A673 (cell line): ENCODE measurements at regions of chr13 and their contacts with region 1.

Region 1: DNA sequence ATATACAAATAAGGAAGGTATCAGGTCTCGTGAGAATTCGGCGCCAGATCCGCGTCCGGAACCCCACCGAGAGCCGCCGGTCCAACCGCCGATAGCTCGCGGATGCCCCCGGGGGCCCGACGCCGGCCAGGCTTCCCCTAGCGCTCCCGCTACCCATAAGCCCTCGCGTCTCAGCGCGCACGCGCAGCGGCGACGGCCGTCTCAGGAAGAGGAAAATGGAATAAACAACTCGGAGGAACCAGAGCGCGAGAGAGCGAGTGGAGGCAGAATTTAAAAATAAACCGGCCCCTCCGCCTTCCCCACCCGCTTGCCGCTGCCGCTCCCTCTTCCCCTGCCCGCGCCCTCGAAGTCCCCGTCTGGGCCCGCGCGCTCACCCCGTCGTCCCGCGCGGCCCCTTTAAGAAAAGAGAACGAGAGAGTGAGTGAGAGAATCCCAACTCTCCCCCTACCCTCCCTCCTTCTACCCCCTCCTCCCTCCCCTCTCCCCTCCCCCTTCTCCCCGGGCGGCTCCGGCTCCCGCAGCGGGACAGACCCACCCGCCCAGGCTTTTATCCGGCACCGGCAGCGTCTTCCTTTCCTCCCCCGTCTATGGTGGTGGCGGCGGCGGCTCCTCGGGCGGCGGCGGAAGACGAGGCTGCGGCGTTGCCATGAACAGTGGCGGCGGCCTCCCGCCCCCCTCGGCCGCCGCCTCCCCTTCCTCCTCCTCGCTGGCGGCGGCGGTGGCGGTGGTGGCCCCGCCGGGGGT is at the start of gene PAN3:
- DNase-seq: peak; percentile 96
- H3K4me3 ChIP-seq: peak within 1 kb of the TSS; percentile 98
- H3K27ac ChIP-seq: peak within 1 kb of the TSS; percentile 100
- H3K4me1 ChIP-seq: peaks cover 12% of the 10 kb centered on the region
- H3K27me3 ChIP-seq: no peaks in the 10 kb centered on the region
- CTCF ChIP-seq: no peak
- total RNA-seq, gene PAN3: 41.5 and 46.1 TPM in 2 replicates

Region 2: GRCh38 chr13:28001049-28001448 is 137.1 kb before region 1 on chr13:
- CTCF ChIA-PET with region 1: no interaction called
- POLR2A ChIA-PET with region 1: interaction called, 10 read pairs
- intact Hi-C with region 1: no loop called
- DNase-seq: no peak
- H3K4me3 ChIP-seq: no peak overlapping the region
- H3K27ac ChIP-seq: no peak overlapping the region
- H3K4me1 ChIP-seq: no peaks in the 10 kb centered on the region
- H3K27me3 ChIP-seq: no peaks in the 10 kb centered on the region
- CTCF ChIP-seq: no peak